ENCODE measurements at regions of chr4 and their contacts with region 1.

Region 1: DNA sequence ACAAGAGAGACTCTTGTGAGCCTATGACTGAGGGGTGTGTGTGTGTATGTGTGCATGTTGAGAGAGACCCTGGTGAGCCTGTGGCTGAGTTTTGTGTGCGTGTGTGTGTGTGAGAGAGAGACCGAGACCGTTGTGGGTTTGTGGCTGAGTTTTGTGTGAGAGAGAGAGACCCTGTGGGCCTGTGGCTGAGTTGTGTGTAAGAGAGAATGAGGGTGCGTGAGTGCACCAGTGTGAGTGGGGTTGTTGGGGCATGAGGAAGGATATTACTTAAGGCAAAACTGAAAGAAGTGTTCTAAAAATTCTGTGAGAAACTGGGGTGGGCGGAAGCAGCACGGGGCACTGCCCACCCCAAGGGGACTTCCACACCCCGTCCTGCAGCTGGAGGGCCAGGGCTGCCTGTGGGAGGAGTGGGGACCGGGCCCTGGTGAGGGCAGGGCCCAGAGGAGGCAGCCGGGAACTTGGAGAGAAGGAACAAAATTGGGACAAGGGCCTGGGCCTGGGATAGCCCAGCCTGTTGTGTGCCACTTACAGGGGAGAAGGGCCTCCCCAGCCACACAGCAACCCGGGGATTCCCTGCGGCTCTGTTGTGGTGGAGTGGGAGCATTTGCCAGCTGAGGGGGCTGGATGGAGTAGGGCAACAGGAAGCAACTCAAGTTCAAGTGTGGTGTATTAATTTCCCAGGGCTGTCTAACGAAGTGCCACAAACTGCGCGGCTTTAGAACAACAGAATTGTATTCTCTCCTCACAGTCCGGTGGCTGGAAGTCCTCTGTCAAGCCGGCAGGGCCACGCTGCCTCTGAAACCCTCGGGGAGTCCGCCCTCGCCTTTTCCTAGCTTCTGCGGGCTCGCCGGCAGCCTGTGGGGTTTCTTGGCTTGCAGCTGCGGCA is 22.1 kb downstream of the TMEM131L start:
- DNase-seq: no peak

Region 2: DNA sequence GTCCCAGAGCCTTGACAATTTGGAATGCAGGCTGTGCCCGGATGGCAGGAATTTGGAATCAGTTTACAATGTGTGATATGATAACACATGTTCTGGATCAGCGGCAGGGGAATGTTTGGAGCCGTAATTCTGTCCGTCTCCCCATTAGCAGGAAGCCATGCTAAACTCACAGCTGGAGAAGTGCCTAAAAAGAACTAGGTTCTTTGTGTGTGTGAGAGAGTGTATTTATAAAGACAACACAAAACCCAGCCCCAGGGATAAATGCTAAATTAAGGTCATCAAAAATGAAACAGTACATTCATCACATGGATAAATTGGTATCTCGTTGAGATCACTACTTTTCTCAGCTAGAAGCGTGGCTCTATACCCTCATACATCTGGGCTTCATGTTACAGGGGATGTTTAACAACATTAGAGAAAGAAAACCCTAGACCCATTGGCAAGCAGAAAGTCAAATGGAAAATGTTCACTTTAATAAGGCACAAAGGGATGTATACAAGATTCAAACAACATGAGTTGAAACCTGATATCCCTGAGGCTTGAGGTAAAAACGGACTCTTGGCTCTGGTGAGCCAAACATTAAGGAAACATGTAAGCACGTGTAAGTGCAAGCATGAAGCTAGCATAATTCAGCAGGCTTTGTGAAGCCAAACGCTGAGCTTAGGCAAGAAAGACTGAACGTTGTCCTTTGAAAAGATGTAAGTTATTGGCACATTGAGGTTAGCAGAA is 40.1 kb before region 1 on chr4:
- CTCF ChIA-PET with region 1: interaction called, 15 read pairs
- POLR2A ChIA-PET with region 1: interaction called, 9 read pairs
- DNase-seq: peak; percentile 31

Measured in HEK293T (cell line).